ENCODE measurements at regions of chr1 and their contacts with region 1.

Region 1: DNA sequence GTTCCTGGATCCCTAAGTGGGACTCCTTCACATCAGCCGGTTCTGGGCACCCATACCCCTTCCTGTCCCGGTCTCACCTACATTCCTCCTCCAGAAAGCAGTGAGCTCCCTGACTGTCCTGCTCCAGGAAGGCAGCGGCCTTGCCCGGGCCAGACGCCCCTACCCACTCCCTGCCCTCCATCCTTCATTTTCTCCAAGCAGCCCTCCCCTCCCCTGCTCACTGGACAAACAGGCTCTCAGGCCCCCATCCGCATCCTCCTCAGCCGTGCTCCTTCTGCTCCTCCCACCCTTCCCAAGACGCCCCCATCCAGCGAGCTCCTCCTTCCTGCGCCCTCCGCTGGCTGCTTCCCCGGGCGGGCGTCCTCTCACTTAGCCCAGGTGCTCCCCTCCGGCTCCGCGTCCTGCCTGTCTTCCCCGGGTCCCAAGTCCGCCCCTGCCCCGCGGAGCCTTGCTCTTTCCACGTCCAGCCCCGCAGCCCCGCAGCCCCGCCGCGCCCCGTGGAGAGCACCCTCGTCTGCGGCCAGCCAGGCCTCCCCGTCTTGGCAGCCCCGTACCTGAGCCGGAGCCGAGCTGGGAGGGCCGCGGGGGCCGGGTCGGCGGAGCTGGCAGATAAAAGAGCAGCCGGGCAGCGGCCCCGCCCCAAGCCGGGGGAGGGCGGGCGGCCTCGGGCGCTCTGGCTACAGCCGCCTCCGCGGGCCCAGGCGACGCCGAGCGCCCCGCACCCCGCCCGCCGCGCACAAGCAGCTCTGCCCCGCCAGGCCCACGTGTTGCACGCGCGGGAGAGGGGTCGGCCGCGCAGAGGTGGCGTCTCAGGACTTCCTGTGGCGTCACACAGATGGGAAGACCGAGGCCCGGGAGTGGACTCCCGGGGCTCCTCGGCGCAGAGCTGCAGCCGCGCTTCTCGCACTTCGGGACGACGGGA is at the start of gene PAQR7:
- DNase-seq: peak; percentile 55 to 65 (median 59)
- H3K4me3 ChIP-seq: peak within 1 kb of the TSS in 1 of 2 donors; percentile 51
- H3K4me3 Mint-ChIP-seq: peak within 1 kb of the TSS; percentile 80 to 88 (median 84)
- H3K27ac ChIP-seq: peak within 1 kb of the TSS; percentile 17
- H3K27ac Mint-ChIP-seq: peak within 1 kb of the TSS; percentile 13 to 89 (median 73)
- H3K4me1 ChIP-seq: peaks cover 10% of the 10 kb centered on the region
- H3K4me1 Mint-ChIP-seq: peaks cover 4 to 13% (median 6%) of the 10 kb centered on the region in 4 donors
- H3K27me3 ChIP-seq: no peaks in the 10 kb centered on the region
- H3K27me3 Mint-ChIP-seq: no peaks in the 10 kb centered on the region
- total RNA-seq, gene PAQR7: 2.1 to 2.6 TPM

Region 2: GRCh38 chr1:25858906-25859789 is 16.0 kb before region 1 on chr1 and contains the start of gene AUNIP:
- CTCF ChIA-PET with region 1: no interaction called
- POLR2A ChIA-PET with region 1: interaction called, 16 read pairs
- intact Hi-C with region 1: loop called (anchors 2 kb)
- DNase-seq: peak; percentile 88 to 89 (median 89)
- H3K4me3 ChIP-seq: peak within 1 kb of the TSS; percentile 56 to 71
- H3K4me3 Mint-ChIP-seq: peak within 1 kb of the TSS; percentile 87 to 95 (median 92)
- H3K27ac ChIP-seq: peak within 1 kb of the TSS; percentile 80
- H3K27ac Mint-ChIP-seq: peak within 1 kb of the TSS; percentile 92 to 98 (median 94)
- H3K4me1 ChIP-seq: peaks cover 16% of the 10 kb centered on the region
- H3K4me1 Mint-ChIP-seq: peaks cover 9 to 24% (median 14%) of the 10 kb centered on the region in 4 donors
- H3K27me3 ChIP-seq: no peaks in the 10 kb centered on the region
- H3K27me3 Mint-ChIP-seq: no peaks in the 10 kb centered on the region
- total RNA-seq, gene AUNIP: not detected

Region 3: GRCh38 chr1:26066857-26067256 is 191.7 kb after region 1 on chr1:
- CTCF ChIA-PET with region 1: no interaction called
- POLR2A ChIA-PET with region 1: no interaction called
- intact Hi-C with region 1: no loop called
- DNase-seq: no peak
- H3K4me3 ChIP-seq: no peak overlapping the region
- H3K4me3 Mint-ChIP-seq: no peak overlapping the region
- H3K27ac ChIP-seq: no peak overlapping the region
- H3K27ac Mint-ChIP-seq: no peak overlapping the region
- H3K4me1 ChIP-seq: no peaks in the 10 kb centered on the region
- H3K4me1 Mint-ChIP-seq: no peaks in the 10 kb centered on the region
- H3K27me3 ChIP-seq: no peaks in the 10 kb centered on the region
- H3K27me3 Mint-ChIP-seq: peaks cover 5 to 20% of the 10 kb centered on the region in 2 donors

Measured in CD4-positive, alpha-beta memory T cell (primary cell).